ENCODE measurements at regions of chr1 and their contacts with region 1.

Region 1: GRCh38 chr1:181990728-181991127 is 70.8 kb downstream of the ZNF648 start:
- DNase-seq: no peak
- H3K4me3 ChIP-seq: no peak overlapping the region
- H3K4me1 ChIP-seq: no peaks in the 10 kb centered on the region
- H3K27me3 ChIP-seq: no peaks in the 10 kb centered on the region; the same call in 1 of the 2 replicates

Region 2: DNA sequence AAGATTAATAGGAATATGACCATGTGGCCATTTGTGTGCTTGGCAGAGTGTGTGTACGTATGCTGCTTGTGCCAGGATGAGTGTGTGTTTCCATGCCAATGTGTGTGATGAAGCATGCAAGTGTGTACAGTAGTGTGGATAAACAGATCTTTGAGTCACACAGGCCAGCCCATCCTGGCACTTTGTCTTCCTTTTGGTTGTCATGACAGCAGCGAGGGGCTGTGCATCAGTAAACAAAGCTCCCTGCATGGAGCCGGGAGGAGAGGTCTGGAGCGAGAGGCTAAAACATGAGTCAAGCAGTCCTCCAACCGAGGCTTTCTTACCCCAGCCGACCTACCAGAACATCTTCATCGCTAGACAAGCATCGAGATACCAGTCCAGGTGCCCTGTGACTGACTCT is 286.2 kb before region 1 on chr1:
- in situ Hi-C with region 1: no loop called
- DNase-seq: no peak
- H3K4me3 ChIP-seq: no peak overlapping the region
- H3K4me1 ChIP-seq: no peaks in the 10 kb centered on the region
- H3K27me3 ChIP-seq: no peaks in the 10 kb centered on the region

Region 3: GRCh38 chr1:182054698-182055326 is 64.1 kb after region 1 on chr1:
- in situ Hi-C with region 1: loop called (anchors 10 kb)
- DNase-seq: peak; percentile 27 to 78
- H3K4me3 ChIP-seq: no peak overlapping the region
- H3K4me1 ChIP-seq: no peaks in the 10 kb centered on the region
- H3K27me3 ChIP-seq: no peaks in the 10 kb centered on the region

Measured in HAP-1 (cell line).